Activated CD8-positive, alpha-beta T cell treated with anti-CD3 and anti-CD28 coated beads for 36 hours (primary cell): ENCODE measurements at regions of chr14 and their contacts with region 1.

Region 1: GRCh38 chr14:53055003-53055402 is 98.1 kb downstream of the DDHD1 start:
- DNase-seq: no peak
- ATAC-seq: peak; percentile 66
- H3K4me3 Mint-ChIP-seq: no peak overlapping the region
- H3K27ac Mint-ChIP-seq: no peak overlapping the region
- H3K4me1 Mint-ChIP-seq: peaks cover 1% of the 10 kb centered on the region
- H3K27me3 Mint-ChIP-seq: no peaks in the 10 kb centered on the region
- CTCF ChIP-seq: peak; percentile 87

Region 2: DNA sequence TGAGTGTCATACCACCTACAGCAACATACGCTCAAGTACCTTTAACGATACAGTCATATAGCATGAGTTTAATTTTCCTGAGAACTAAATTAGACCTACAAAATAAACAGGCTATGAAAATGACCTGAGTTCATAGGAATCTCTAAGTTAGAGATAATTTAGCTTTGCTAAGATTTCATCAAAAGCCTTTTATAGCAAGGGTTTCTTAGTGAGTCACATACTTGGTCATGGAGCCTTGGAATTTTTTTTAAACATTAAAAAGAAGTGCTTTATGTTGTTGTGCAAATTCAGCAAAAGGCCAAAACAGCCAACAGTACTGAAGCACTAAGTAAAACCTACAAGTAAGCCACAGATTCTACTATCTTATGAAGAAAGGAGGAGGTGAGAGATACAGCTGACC is 10.5 kb before region 1 on chr14:
- CTCF ChIA-PET with region 1: interaction called, 30 read pairs
- POLR2A ChIA-PET with region 1: no interaction called
- intact Hi-C with region 1: no loop called
- DNase-seq: no peak
- ATAC-seq: no peak
- H3K4me3 Mint-ChIP-seq: no peak overlapping the region
- H3K27ac Mint-ChIP-seq: no peak overlapping the region
- H3K4me1 Mint-ChIP-seq: no peaks in the 10 kb centered on the region
- H3K27me3 Mint-ChIP-seq: no peaks in the 10 kb centered on the region
- CTCF ChIP-seq: no peak